AG04450 (cell line): ENCODE measurements at regions of chr7 and their contacts with region 1.

Region 1: DNA sequence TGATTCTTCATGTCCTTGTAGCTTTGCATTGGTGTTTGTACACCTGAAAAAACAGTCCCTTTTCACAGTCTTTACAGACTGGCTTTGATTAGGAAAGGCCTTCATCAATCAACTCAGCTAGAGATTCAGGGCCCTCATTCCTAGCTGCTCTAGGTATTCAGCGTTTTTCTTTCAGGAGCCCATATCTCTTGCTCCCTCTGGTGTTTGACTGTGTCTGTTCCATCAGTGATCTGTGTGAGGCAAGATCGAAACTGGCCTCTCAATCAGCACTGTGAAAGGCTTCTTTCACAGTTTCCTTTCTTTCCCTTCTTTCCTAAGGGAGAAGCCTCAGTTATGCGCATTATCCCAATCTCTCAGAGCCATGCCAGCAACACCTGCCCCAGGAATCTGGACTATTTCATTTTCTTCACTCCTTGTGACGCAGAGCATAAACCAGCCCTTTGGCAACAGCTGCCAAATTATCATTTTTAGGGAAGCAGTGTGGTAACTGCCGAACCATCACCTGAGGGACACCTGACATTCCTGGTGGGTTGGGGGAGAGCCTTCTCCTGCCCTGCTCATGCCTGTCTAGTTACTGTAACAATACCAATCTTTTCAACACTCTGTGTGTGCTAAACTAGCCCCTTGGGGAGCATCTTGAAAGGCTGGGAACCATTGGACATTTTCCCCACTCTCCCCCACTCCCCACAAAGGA is 75.7 kb upstream of the CCDC71L start:
- DNase-seq: peak; percentile 56
- H3K4me3 ChIP-seq: no peak overlapping the region
- H3K27ac ChIP-seq: peak overlapping the region; percentile 63
- H3K27me3 ChIP-seq: no peaks in the 10 kb centered on the region
- CTCF ChIP-seq: peak; percentile 82

Region 2: DNA sequence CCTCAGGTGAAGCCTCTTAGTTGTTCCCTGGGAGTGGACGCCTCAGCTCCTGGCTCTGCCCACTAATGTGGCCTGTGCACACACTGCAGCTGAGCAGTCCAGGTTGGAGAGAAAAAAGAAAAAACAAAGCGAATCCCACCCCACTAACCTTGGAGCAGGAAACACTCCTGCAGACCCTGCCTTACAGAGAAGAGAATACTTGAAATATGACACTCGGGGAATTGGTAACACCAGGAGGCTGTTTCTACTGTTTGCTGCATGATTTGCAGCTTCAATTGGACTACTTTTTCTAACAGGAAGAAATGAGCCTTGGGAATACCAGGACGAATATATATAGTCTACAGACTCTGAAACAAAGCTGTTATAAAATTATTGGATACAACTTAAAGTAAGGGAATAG is 751.4 kb before region 1 on chr7:
- CTCF ChIA-PET with region 1: no interaction called
- POLR2A ChIA-PET with region 1: no interaction called
- DNase-seq: no peak
- H3K4me3 ChIP-seq: no peak overlapping the region
- H3K27ac ChIP-seq: no peak overlapping the region
- H3K27me3 ChIP-seq: peaks cover 34% of the 10 kb centered on the region
- CTCF ChIP-seq: no peak

Region 3: DNA sequence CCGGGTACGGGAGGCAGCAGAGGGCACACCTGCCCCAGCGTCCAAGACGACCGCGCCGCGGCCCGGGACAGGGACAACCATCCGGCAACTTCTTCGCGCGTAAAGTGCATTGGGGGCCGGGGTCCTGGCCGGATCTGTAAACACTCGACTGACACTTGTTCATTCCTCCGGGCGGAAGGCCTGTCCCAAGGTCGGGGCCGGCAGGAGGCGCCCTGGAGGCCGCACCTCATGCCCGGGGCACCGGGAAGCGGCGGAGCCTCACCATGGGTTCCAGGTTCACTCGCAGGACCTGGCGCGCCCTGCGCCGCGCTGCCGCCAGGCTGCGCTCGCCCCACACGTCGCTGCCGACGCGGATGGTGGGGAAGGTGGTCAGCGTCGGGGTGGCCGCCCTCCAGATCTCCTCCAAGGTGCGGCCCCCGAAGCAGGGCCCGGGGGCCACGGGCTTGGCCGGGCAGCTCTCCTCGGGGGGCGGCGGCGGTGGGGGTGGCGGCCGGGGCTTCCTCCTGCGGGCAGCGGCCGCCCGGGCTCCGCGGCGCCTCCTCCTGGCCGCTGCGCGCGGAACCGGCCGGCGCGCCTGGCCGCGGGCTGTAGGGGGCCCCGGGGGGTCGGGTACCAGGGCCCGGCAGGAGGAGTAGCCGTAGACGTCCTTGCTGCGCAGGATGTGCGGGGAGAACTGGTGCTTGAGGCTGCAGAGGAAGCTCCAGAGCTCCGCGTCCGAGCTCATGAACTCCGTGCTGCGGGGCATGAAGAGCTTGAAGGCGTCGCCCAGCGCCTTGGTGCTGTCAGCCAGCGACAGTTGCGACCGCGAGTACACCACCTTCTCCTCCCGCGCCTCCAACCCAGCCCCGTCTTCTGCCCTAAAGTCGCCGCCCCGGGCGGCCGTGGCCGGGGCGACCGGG is 76.4 kb before region 1 on chr7:
- CTCF ChIA-PET with region 1: interaction called, 25 read pairs
- POLR2A ChIA-PET with region 1: interaction called, 7 read pairs
- DNase-seq: no peak
- H3K4me3 ChIP-seq: peak overlapping the region; percentile 95
- H3K27ac ChIP-seq: peak overlapping the region; percentile 87
- H3K27me3 ChIP-seq: no peaks in the 10 kb centered on the region
- CTCF ChIP-seq: peak; percentile 78

Region 4: DNA sequence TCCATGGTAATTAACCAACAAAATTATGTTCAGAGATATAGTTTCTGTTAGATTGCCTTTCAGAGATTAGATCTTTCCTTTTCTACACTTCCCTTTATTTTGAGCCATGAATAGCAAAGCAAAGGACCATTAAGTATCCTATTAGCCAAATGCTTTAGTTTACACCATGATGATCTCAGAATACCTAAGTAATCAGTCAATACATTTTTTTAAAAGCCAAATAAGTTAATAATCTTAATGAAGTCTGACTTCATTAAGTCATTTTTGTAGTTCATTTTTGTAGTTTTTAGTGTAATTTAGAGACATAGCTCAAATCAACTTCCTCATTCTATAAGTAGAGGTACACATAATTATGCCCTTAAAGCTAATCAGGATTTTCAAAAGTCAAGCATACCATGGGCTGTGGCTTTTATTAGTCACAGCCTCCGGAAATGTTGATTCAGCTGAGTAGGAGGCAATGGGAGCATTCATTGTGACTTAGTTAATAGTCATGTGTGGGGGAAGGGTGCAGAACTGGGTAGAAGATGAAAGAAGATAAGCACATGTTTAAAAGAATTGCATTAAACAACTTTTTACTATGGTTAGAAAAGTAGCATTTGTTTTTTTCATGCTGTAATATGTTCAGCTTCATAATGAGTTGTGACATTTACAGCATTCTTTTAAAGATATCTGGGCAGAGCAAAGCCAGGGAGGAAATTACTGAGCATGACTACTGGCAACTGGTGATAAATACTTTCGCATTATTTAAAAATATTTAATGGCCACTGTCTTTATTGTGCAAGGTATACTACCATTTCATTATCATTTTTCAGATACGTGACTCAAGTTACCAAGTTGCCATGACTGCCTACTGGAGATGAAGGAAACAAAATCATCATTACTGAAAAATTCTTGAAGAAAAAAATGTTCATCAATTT is 18.4 kb before region 1 on chr7:
- CTCF ChIA-PET with region 1: interaction called, 13 read pairs
- POLR2A ChIA-PET with region 1: interaction called, 3 read pairs
- DNase-seq: peak; percentile 88
- H3K4me3 ChIP-seq: no peak overlapping the region
- H3K27ac ChIP-seq: peak overlapping the region; percentile 77
- H3K27me3 ChIP-seq: no peaks in the 10 kb centered on the region
- CTCF ChIP-seq: no peak

Region 5: DNA sequence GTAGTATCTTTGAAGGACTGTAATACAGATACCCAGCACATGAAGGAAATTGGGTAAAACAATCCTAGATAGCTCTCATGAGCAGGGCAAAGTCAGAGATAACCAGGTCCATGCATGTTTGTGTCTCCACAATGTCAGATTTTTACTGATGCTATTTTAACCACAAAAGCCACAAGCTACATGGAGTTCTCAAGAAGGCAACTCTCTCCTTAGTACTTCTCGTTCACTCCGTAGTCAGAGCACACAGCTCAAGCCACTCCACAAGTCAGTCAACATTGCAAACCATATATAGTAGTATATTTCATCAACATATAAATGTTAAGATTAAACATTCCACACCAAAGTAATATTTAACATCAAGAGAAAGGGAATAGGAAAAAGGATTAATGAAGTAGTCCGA is 30.4 kb after region 1 on chr7:
- CTCF ChIA-PET with region 1: interaction called, 15 read pairs
- POLR2A ChIA-PET with region 1: no interaction called
- DNase-seq: no peak
- H3K4me3 ChIP-seq: no peak overlapping the region
- H3K27ac ChIP-seq: peak overlapping the region; percentile 58
- H3K27me3 ChIP-seq: no peaks in the 10 kb centered on the region
- CTCF ChIP-seq: no peak

Region 6: DNA sequence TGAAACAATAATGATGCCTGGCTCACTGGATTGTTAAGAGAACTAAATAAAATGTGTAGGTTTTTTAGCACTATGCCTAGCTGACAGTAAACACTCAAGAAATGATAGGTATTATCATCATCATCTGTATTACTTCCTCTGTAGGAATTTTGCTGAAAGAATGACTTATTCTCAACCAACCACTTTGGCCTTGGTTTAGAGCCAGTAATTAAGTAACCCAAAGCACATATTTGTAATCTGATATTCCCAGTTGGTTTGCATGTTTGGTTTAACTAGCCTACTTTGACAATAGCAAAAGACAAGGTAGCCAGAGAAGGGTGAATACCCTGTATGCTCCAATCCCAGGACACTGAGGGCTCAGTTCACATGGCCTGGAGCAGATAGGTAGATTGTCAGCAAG is 877.8 kb after region 1 on chr7:
- CTCF ChIA-PET with region 1: no interaction called
- POLR2A ChIA-PET with region 1: no interaction called
- DNase-seq: peak; percentile 33
- H3K4me3 ChIP-seq: no peak overlapping the region
- H3K27ac ChIP-seq: no peak overlapping the region
- H3K27me3 ChIP-seq: no peaks in the 10 kb centered on the region
- CTCF ChIP-seq: no peak